ENCODE measurements at regions of chr15 and their contacts with region 1.

Region 1: DNA sequence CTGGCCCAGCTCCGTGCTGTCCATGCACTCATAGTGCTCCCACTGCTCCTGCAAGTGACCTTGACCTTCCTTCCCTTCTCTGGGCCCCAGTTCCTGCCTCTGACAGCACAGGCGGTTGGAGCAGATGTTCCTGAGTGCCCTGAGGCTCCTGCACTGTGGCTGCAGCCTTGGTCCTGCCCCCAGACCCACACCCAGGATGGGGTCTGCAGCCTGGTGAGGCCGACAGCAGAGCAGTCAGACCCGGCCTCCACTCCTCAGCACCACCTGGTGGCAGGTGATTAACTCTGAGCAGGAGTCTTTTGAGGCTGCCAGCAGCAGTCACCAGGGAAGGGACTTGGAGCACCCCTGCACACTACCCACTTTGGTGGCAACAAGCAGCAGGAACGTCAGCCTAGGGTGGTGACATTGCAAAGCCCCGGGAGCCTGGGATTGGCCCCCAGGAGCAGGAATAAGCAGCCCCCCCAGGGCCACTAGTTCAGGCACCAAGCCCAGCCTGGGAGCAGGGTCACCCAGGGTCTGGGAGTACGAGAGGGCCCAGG is 64.6 kb downstream of the CYP11A1 start:
- DNase-seq: no peak
- ATAC-seq: peak; percentile 81
- H3K4me3 ChIP-seq: no peak overlapping the region
- H3K27ac ChIP-seq: no peak overlapping the region
- H3K4me1 ChIP-seq: no peaks in the 10 kb centered on the region; the same call in 1 of the 2 replicates
- H3K27me3 ChIP-seq: no peaks in the 10 kb centered on the region
- CTCF ChIP-seq: peak; percentile 90

Region 2: GRCh38 chr15:73637527-73637926 is 665.4 kb before region 1 on chr15:
- CTCF ChIA-PET with region 1: no interaction called
- POLR2A ChIA-PET with region 1: no interaction called
- in situ Hi-C with region 1: no loop called
- intact Hi-C with region 1: no loop called
- DNase-seq: no peak
- ATAC-seq: no peak
- H3K4me3 ChIP-seq: no peak overlapping the region
- H3K27ac ChIP-seq: no peak overlapping the region
- H3K4me1 ChIP-seq: peaks cover 10% of the 10 kb centered on the region
- H3K27me3 ChIP-seq: peaks cover 2% of the 10 kb centered on the region; the same call in 1 of the 2 replicates
- CTCF ChIP-seq: no peak

Region 3: DNA sequence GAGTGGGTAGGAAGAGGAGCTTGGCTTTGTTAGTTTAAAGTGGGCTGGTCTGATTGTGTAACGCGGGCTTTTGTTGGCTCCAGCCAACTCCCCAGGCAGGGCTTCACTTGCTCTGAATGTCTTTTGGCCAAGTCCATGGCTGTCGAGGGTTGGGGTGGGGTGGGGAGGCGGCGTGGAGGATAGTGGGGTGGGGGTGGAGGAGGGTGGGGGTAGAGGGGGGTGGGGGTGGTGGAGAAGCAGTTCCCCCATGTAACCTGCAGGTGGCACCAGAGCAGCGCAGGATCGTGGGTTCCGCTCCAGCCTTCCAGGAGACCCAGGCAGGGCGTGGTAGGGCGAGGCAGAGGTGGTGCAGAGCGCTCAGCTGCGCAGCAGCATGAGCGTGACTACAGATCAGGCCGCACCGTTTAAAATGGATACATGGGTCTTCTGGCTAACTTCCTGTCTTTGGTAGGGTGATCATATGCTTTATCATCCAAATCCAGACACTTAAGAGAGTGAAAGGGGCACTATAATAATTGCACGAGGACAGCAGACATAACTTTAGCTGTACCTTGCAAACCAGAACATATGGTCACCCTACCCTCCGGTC is 248.9 kb before region 1 on chr15:
- CTCF ChIA-PET with region 1: interaction called, 22 read pairs
- POLR2A ChIA-PET with region 1: no interaction called
- in situ Hi-C with region 1: no loop called
- intact Hi-C with region 1: loop called (anchors 2 kb)
- DNase-seq: no peak
- ATAC-seq: peak; percentile 96
- H3K4me3 ChIP-seq: peak overlapping the region; percentile 7 to 31; a peak in 2 of 4 replicates
- H3K27ac ChIP-seq: no peak overlapping the region
- H3K4me1 ChIP-seq: no peaks in the 10 kb centered on the region
- H3K27me3 ChIP-seq: peaks cover 2% of the 10 kb centered on the region; the same call in 1 of the 2 replicates
- CTCF ChIP-seq: peak; percentile 88

Region 4: GRCh38 chr15:74196179-74196590 is 106.7 kb before region 1 on chr15:
- CTCF ChIA-PET with region 1: interaction called, 3 read pairs
- POLR2A ChIA-PET with region 1: no interaction called
- in situ Hi-C with region 1: no loop called
- intact Hi-C with region 1: loop called (anchors 5 kb)
- DNase-seq: no peak
- ATAC-seq: peak; percentile 37
- H3K4me3 ChIP-seq: no peak overlapping the region
- H3K27ac ChIP-seq: no peak overlapping the region
- H3K4me1 ChIP-seq: peaks cover 13% of the 10 kb centered on the region
- H3K27me3 ChIP-seq: no peaks in the 10 kb centered on the region
- CTCF ChIP-seq: no peak

Region 5: GRCh38 chr15:74259821-74260607 is 42.9 kb before region 1 on chr15:
- CTCF ChIA-PET with region 1: interaction called, 3 read pairs
- POLR2A ChIA-PET with region 1: interaction called, 17 read pairs
- in situ Hi-C with region 1: no loop called
- intact Hi-C with region 1: no loop called
- DNase-seq: no peak
- ATAC-seq: no peak
- H3K4me3 ChIP-seq: no peak overlapping the region
- H3K27ac ChIP-seq: no peak overlapping the region
- H3K4me1 ChIP-seq: no peaks in the 10 kb centered on the region
- H3K27me3 ChIP-seq: no peaks in the 10 kb centered on the region; the same call in 1 of the 2 replicates
- CTCF ChIP-seq: no peak

Region 6: DNA sequence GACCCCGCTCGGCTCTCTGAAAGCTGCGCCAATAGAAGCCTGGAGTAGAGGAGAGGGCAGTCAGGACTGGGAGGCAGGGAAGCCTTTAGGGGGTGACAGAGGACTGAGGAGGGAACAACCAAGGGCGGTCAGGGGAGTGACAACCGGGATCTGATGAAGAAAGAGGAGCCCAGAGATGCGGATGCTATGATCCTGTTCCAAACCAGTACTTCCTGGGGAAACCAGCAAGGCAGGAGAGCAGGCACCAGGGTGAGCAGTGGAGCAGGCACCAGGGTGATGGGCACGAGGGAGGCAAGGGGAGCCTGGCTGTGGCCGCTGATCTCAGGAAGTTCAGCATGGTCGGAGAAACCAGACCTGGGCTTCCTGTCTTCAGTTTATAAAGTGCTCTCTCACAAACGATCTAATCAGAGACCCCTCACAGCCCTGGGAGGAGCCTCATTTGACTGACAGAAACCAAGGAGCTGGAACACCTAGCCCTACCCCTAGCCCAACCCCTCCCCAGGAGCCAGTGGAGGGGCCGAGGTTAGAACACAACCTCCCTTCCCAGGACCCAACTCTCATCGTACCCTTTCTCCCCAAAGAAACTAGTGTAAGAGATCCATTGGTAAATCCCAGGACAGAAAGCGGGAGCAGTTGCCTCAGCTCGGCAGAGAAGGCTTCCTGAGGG is 31.9 kb before region 1 on chr15:
- CTCF ChIA-PET with region 1: no interaction called
- POLR2A ChIA-PET with region 1: no interaction called
- in situ Hi-C with region 1: no loop called
- intact Hi-C with region 1: no loop called
- DNase-seq: no peak
- ATAC-seq: 0 out of 2 replicates have a peak, but pooled peaks have one; percentile 50
- H3K4me3 ChIP-seq: no peak overlapping the region
- H3K27ac ChIP-seq: no peak overlapping the region
- H3K4me1 ChIP-seq: no peaks in the 10 kb centered on the region
- H3K27me3 ChIP-seq: peaks cover 5% of the 10 kb centered on the region; the same call in 1 of the 2 replicates
- CTCF ChIP-seq: no peak

Measured in Panc1 (cell line).